ENCODE measurements at regions of chr15 and their contacts with region 1.

Region 1: GRCh38 chr15:65638681-65639089 is 16.9 kb downstream of the SLC24A1 start:
- DNase-seq: peak; percentile 86
- H3K4me3 Mint-ChIP-seq: no peak overlapping the region
- H3K27ac Mint-ChIP-seq: no peak overlapping the region
- H3K4me1 Mint-ChIP-seq: peaks cover 17% of the 10 kb centered on the region
- H3K27me3 Mint-ChIP-seq: no peaks in the 10 kb centered on the region
- CTCF ChIP-seq: peak; percentile 73

Region 2: DNA sequence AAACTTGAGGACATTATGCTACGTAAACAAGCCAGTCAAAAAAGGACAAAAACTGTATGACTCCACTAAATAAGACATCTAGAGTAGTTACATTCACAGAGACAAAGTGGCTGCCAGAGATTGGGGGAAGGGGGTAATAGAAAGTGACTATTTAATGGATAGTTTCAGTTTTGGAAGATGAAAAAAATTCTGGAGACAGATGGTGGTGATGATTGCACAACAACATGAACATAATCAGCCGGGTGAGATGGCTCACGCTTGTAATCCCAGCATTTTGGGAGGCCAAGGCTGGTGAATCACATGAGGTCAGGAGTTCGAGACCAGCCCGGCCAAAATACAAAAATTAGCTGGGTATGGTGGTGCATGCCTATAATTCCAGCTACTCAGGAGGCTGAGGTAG is 161.8 kb before region 1 on chr15:
- CTCF ChIA-PET with region 1: no interaction called
- POLR2A ChIA-PET with region 1: no interaction called
- intact Hi-C with region 1: no loop called
- DNase-seq: peak; percentile 33
- H3K4me3 Mint-ChIP-seq: no peak overlapping the region
- H3K27ac Mint-ChIP-seq: no peak overlapping the region
- H3K4me1 Mint-ChIP-seq: peaks cover 6% of the 10 kb centered on the region
- H3K27me3 Mint-ChIP-seq: no peaks in the 10 kb centered on the region
- CTCF ChIP-seq: no peak

Region 3: DNA sequence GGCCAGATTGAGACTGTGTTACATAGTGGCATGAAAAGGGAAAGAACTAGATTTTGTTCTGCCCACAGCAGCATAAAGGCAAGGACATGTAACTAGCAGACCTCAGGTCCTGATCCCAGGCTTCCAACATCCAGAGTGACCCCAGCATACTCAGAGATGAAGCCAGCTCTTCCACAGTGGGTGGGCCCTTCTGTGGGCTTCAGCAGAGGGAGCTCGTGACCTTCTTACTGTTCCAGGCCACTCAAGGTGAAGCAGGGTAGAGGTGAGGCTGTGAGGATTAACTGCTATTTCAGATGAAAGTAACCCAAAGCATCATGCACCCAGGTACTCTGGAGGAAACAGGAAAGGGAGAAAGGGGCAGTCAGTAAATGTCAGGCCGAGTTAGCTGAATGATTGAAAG is 17.9 kb before region 1 on chr15:
- CTCF ChIA-PET with region 1: interaction called, 16 read pairs
- POLR2A ChIA-PET with region 1: no interaction called
- intact Hi-C with region 1: no loop called
- DNase-seq: no peak
- H3K4me3 Mint-ChIP-seq: no peak overlapping the region
- H3K27ac Mint-ChIP-seq: no peak overlapping the region
- H3K4me1 Mint-ChIP-seq: no peaks in the 10 kb centered on the region
- H3K27me3 Mint-ChIP-seq: no peaks in the 10 kb centered on the region
- CTCF ChIP-seq: no peak

Region 4: DNA sequence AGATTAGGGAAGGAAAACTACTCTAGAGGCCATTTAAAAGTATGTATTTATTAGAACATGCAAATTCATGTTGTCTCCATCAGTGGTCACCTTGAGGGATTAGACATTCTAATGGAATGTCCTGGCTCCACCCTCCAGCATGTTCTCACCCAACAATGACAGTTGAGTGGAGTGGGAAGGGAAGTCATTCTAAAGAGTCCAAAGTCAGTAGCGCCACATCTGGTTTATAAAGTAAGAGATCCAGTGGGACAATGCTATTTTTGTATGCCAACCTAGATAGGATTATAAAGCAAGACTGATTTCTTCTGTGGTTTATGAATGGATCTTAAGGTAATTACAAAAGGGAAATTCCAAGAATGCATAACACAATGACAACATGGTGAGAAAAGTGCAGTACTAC is 16.3 kb after region 1 on chr15:
- CTCF ChIA-PET with region 1: interaction called, 12 read pairs
- POLR2A ChIA-PET with region 1: interaction called, 3 read pairs
- intact Hi-C with region 1: no loop called
- DNase-seq: no peak
- H3K4me3 Mint-ChIP-seq: no peak overlapping the region
- H3K27ac Mint-ChIP-seq: peak overlapping the region; percentile 80
- H3K4me1 Mint-ChIP-seq: peaks cover 26% of the 10 kb centered on the region
- H3K27me3 Mint-ChIP-seq: no peaks in the 10 kb centered on the region
- CTCF ChIP-seq: no peak

Region 5: DNA sequence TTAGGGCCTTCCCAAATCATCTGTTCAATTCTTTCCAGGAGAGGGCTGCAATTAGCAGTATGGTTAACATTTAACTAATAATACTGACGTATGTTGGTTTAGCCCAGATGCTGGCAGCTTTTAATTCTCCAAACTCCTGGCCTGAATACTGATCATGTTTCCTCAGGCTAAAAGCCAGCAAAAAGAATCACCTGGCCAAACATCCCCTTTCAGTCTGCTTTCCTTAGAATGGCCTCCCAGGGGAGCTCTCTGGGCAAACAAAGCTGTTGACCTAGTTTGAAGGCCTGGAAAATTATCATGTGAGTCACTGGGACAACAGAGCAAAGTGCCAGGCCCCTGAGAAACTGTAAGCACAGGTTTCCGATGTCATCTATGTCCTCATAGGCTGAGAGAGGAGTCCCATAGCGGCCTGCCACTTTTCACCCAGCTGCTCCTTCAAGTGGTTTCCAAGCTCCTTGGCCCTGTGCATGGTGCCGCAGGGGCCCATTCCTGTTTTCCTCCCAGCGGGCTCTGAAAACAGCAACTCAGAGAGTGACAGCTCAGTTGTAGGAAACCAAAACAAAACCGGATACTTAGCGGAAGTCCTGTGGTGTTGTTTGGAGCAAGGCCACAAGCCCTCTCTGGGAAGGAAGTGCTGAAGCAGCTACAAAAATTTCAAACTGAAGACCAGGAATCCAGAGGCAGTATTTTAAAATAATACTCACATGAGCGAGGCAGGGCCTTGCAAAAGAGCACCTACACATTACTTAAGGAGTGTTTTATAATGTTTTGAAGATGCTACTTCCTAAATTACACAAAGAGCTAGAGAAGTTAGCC is 194.1 kb after region 1 on chr15:
- CTCF ChIA-PET with region 1: interaction called, 24 read pairs
- POLR2A ChIA-PET with region 1: interaction called, 4 read pairs
- intact Hi-C with region 1: loop called (anchors 1 kb)
- DNase-seq: peak; percentile 97
- H3K4me3 Mint-ChIP-seq: no peak overlapping the region
- H3K27ac Mint-ChIP-seq: peak overlapping the region; percentile 73
- H3K4me1 Mint-ChIP-seq: peaks cover 14% of the 10 kb centered on the region
- H3K27me3 Mint-ChIP-seq: no peaks in the 10 kb centered on the region
- CTCF ChIP-seq: no peak

Region 6: GRCh38 chr15:65856821-65857455 is 218.3 kb after region 1 on chr15:
- CTCF ChIA-PET with region 1: interaction called, 7 read pairs
- POLR2A ChIA-PET with region 1: interaction called, 3 read pairs
- intact Hi-C with region 1: loop called (anchors 2 kb)
- DNase-seq: peak; percentile 80
- H3K4me3 Mint-ChIP-seq: no peak overlapping the region
- H3K27ac Mint-ChIP-seq: no peak overlapping the region
- H3K4me1 Mint-ChIP-seq: no peaks in the 10 kb centered on the region
- H3K27me3 Mint-ChIP-seq: peaks cover 17% of the 10 kb centered on the region
- CTCF ChIP-seq: peak; percentile 73

Region 7: DNA sequence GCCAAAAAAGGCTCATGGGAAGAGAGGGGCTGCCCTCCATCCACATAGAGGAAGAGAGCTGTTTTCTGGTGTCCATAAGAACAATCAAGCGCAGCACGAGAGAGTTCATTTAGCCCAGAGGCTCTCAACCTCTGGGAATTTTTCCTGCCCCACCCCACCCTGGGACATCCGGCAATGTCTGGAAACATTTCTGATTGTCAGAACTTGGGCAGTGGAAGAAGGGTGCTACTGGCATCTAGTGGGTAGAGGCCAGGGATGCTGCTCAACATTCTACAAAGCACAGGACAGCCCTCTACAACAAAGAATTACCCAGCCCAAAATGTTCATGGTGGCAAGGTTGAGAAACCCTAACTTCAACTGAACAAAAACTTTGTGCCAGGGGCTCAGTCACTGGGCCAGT is 323.5 kb after region 1 on chr15:
- CTCF ChIA-PET with region 1: no interaction called
- POLR2A ChIA-PET with region 1: no interaction called
- intact Hi-C with region 1: loop called (anchors 5 kb)
- DNase-seq: peak; percentile 43
- H3K4me3 Mint-ChIP-seq: no peak overlapping the region
- H3K27ac Mint-ChIP-seq: no peak overlapping the region
- H3K4me1 Mint-ChIP-seq: no peaks in the 10 kb centered on the region
- H3K27me3 Mint-ChIP-seq: peaks cover 50% of the 10 kb centered on the region
- CTCF ChIP-seq: peak; percentile 22